Calu3 (cell line): ENCODE measurements at regions of chr7 and their contacts with region 1.

Region 1: DNA sequence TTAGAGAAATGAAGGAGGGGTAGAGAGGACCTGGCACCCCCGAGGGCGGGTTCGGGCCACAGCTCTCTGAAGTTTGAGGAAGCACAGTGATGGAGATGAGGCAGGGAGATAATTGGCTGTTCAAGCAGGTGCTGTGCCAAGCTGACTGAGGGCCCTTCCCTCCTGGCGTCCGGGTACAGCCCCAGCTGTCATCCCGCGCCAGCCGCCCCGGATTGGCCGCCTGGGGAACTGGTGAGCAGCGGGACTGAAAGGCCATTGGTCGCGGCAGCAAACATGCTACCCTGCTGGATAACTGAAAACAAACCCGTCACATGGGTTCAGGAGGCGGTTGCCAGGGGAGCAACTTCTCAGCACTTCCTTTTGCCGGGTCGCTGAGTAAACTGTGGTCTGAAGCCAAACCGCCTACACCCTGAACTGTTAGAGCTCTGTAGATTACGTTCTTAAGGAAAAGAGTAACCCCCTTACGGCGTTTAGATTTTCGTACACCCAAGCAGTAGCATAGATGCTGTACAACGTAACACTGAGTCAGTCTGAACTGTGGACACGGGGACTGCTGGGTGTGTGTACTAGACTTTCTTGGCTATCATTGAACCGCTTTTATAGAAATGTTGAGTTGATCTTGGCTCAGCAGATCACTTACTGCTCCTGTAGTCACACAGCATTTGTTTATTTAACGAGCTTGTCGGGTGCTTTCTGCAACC is 1.3 kb downstream of the INSIG1 start:
- DNase-seq: peak; percentile 94
- H3K4me3 Mint-ChIP-seq: peak overlapping the region; percentile 92
- H3K27ac Mint-ChIP-seq: peak overlapping the region; percentile 85
- H3K4me1 Mint-ChIP-seq: peaks cover 36% of the 10 kb centered on the region
- H3K27me3 Mint-ChIP-seq: no peaks in the 10 kb centered on the region
- CTCF ChIP-seq: no peak

Region 2: DNA sequence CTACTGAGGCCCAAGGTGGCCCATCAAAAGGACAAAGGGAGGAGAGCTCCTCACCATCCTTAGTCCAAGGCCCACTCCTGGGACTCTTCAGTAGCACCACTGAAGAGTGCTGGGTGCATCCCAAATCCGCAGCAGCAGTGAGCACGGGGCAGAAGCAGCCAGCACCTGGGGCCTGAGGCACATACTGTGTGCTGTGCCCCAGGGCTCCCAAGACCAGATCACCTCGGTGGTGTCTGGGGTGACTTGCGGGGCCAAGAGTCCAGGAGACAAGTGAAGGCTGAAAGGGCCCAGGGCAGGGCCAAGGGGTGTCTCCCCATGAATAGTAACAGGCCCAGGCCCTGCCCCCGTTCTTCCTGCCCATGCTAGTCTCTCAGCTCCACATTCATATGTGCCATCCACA is 61.3 kb before region 1 on chr7:
- CTCF ChIA-PET with region 1: interaction called, 3 read pairs
- intact Hi-C with region 1: loop called (anchors 2 kb)
- DNase-seq: no peak
- H3K4me3 Mint-ChIP-seq: no peak overlapping the region
- H3K27ac Mint-ChIP-seq: no peak overlapping the region
- H3K4me1 Mint-ChIP-seq: peaks cover 62% of the 10 kb centered on the region
- H3K27me3 Mint-ChIP-seq: no peaks in the 10 kb centered on the region
- CTCF ChIP-seq: no peak